Sciatic nerve (tissue), 2 donors: ENCODE measurements at regions of chr2 and their contacts with region 1.

Region 1: GRCh38 chr2:236521556-236521955 is 48.1 kb upstream of the ACKR3 start:
- DNase-seq: no peak
- ATAC-seq: no peak

Region 2: GRCh38 chr2:236489895-236490404 is 31.6 kb before region 1 on chr2:
- intact Hi-C with region 1: loop called (anchors 1 kb)
- DNase-seq: no peak
- ATAC-seq: no peak